IMR-90 (cell line): ENCODE measurements at regions of chr2 and their contacts with region 1.

Region 1: GRCh38 chr2:211259831-211260476 is 703.6 kb downstream of the CPS1 start:
- DNase-seq: no peak
- ATAC-seq: no peak
- H3K4me3 ChIP-seq: no peak overlapping the region
- H3K27ac ChIP-seq: no peak overlapping the region
- H3K4me1 ChIP-seq: no peaks in the 10 kb centered on the region
- H3K27me3 ChIP-seq: no peaks in the 10 kb centered on the region
- CTCF ChIP-seq: no peak
- POLR2A ChIP-seq: no peak
- RAD21 ChIP-seq: no peak

Region 2: GRCh38 chr2:209872675-209873074 is 1387.3 kb before region 1 on chr2:
- CTCF ChIA-PET with region 1: no interaction called
- POLR2A ChIA-PET with region 1: no interaction called
- dilution Hi-C with region 1: no loop called
- in situ Hi-C with region 1: no loop called
- intact Hi-C with region 1: loop called (anchors 10 kb)
- DNase-seq: no peak
- ATAC-seq: no peak
- H3K4me3 ChIP-seq: no peak overlapping the region
- H3K27ac ChIP-seq: no peak overlapping the region
- H3K4me1 ChIP-seq: no peaks in the 10 kb centered on the region
- H3K27me3 ChIP-seq: no peaks in the 10 kb centered on the region
- CTCF ChIP-seq: no peak
- POLR2A ChIP-seq: no peak
- RAD21 ChIP-seq: no peak